ENCODE measurements at regions of chr10 and their contacts with region 1.

Region 1: GRCh38 chr10:101782811-101783735 is at the start of gene NPM3:
- DNase-seq: peak; percentile 29
- H3K4me3 ChIP-seq: peak within 1 kb of the TSS; percentile 94
- H3K27ac ChIP-seq: peak within 1 kb of the TSS; percentile 25
- H3K27me3 ChIP-seq: peaks cover 10% of the 10 kb centered on the region
- CTCF ChIP-seq: no peak
- polyA plus RNA-seq, gene NPM3: 31.5 and 41.5 TPM in 2 replicates

Region 2: DNA sequence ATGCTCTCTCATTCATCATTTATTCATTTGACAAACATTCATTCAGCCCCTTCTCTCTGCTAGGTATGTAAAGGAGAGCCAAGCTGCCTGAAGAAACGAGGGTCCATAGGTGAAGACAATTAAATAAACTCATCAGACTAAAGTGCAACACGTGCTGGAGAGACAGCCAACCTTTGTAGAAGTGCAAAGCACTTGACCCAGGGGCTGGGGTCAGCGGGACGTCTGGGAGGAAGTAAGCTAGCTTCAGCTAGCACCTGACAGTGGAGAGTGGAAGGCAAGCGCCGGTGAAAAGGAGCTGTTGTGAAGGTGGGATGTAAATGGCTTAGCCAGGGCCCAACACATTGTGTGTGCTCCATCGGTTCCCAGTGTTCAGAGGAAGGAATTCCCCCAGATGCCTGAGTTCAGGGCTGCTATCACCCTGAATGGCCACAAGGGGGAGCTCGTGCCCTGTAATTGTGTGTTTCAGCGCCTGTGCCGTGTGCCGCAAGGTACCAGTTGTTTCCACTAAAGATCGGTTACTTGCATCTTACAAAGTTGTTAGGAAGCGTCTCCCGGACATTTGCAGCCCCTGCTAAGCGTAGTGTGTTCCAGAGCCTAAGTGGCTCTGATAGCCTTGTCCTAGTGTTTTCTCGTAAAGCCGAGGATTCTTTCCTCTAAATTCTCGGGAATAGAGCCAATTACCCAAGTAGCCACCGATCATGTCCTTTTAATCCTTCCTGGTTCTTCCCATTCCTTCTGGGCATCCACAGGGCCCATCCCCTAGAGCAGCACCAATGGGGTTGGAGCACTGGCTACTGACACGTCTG is 621.4 kb before region 1 on chr10:
- CTCF ChIA-PET with region 1: interaction called, 17 read pairs
- POLR2A ChIA-PET with region 1: no interaction called
- DNase-seq: peak; percentile 43
- H3K4me3 ChIP-seq: peak overlapping the region; percentile 57
- H3K27ac ChIP-seq: no peak overlapping the region
- H3K27me3 ChIP-seq: peaks cover 42% of the 10 kb centered on the region
- CTCF ChIP-seq: peak; percentile 94

Region 3: DNA sequence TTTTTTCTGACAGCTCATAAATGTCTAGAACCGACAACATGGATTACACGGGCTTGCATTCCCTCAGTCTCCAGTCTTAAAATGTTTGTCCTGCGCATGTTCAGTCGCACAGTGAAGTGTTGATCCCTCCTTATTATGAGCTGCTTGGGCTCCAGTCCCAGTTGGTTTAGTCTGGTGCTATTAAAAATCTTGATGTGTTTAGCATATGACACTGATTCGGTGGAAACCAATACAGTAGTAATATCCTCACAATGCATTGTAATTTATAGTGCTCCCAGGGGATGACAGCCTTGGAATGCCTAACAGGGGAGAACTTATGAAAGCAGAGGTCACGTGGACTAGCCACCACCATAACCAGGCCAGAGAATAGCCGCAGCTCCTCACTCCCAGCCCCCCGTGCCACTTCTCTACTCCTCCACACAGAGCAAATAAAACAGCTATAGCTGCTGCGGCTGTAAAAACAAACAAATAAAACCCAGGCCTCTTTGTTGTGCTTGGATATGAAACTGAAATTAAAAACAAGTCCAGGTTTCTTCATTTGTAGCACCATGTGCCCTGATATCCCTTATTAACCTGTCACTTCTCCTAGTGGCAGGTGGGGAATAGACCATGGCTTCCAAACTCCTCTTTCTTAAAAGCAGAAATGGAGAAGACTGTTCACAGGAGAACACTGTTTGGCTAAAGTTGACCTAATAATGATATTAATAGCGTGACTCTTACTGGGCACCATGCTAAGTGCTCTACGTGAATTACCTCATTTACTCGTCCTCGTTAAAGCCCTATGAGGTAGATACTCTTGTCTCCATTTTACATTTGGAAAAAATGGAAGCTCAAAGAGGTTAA is 187.3 kb before region 1 on chr10:
- CTCF ChIA-PET with region 1: interaction called, 127 read pairs
- POLR2A ChIA-PET with region 1: no interaction called
- DNase-seq: no peak
- H3K4me3 ChIP-seq: no peak overlapping the region
- H3K27ac ChIP-seq: no peak overlapping the region
- H3K27me3 ChIP-seq: no peaks in the 10 kb centered on the region
- CTCF ChIP-seq: no peak

Region 4: DNA sequence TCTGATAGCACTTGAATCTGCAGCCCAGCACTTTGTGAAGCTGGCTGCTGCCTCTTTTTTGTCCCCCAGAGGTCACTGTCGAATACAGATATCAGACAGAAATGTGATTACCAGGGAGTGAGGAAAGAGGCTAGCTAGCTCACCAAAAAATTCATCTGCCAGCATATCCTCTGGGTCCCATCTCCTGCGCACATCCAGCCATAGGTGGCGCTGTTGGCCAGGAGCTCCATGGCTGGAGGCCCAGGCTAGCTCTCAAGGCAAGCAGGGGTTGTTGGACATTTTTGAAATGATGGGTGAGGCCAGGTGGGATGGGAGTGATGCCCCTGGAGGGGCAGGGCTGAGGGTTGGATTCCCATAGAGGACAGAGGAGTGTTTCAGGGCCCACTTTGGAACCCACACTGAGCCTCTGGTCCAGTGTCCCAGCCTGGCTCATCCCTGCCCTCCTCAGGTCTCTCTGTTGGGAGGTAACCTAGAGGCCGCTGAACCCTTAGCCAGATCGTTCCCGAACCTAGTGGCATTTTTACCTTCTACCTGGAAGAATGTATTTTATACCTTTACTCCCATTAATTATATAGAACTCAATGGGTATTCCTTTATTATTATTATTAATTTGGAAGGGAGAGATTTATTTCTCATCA is 180.2 kb before region 1 on chr10:
- CTCF ChIA-PET with region 1: interaction called, 127 read pairs
- POLR2A ChIA-PET with region 1: interaction called, 6 read pairs
- DNase-seq: peak; percentile 33
- H3K4me3 ChIP-seq: no peak overlapping the region
- H3K27ac ChIP-seq: no peak overlapping the region
- H3K27me3 ChIP-seq: no peaks in the 10 kb centered on the region
- CTCF ChIP-seq: peak; percentile 94

Region 5: DNA sequence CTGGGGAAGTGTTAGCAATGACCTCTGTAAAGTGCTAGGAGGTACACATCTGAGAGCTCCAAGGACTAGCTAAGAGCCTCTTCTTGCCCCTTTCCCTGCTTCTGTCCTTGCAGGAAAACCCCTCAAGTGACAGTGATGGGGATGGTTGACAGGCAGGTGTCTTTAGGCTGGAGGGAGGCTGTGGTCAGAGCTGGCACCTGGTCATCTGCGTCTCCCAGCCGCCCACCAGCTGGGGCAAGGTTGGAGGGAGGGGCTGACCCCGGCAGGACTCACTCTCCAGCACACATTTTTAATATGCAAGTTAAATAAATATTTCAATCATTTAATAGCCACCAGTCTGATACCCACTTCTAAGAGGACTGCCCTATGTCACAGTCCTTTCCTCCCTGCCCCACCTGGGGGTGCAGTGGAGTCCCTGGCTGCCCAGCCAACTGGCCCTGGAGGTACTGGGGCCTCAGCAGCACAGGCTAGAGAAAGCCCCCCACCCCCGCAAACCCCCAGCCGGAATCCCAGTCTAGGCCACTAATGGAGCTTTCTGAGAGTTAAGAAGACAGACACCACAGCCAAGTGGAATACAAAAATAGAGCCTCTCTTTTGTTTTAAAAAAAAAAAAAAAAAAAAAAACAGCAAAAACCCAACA is 13.4 kb before region 1 on chr10:
- CTCF ChIA-PET with region 1: interaction called, 20 read pairs
- POLR2A ChIA-PET with region 1: no interaction called
- DNase-seq: no peak
- H3K4me3 ChIP-seq: no peak overlapping the region
- H3K27ac ChIP-seq: no peak overlapping the region
- H3K27me3 ChIP-seq: peaks cover 85% of the 10 kb centered on the region
- CTCF ChIP-seq: no peak

Region 6: GRCh38 chr10:101797403-101798059 is 14.5 kb after region 1 on chr10:
- CTCF ChIA-PET with region 1: interaction called, 55 read pairs
- POLR2A ChIA-PET with region 1: interaction called, 4 read pairs
- DNase-seq: no peak
- H3K4me3 ChIP-seq: no peak overlapping the region
- H3K27ac ChIP-seq: no peak overlapping the region
- H3K27me3 ChIP-seq: no peaks in the 10 kb centered on the region
- CTCF ChIP-seq: no peak

Region 7: DNA sequence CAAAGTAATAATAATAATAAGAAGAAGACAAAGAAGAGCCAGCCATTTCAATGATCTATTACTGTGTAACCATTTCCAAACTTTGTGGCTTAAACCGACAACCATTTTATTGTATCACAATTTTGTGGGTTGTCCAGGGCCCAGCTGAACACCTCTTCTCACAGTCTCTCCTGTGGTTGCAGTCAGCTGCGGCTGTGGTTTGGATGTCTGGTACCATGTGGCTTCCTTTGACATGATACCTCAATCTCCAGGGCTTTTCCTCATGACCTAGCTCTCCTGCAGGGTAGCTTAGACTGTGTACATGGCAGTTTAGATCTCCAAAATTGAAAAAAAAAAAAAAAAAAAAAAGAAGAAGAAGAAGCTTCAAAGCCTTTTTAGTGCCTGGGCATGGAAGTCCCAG is 539.8 kb after region 1 on chr10:
- CTCF ChIA-PET with region 1: no interaction called
- POLR2A ChIA-PET with region 1: no interaction called
- DNase-seq: no peak
- H3K4me3 ChIP-seq: no peak overlapping the region
- H3K27ac ChIP-seq: no peak overlapping the region
- H3K27me3 ChIP-seq: no peaks in the 10 kb centered on the region
- CTCF ChIP-seq: no peak

Measured in AG04450 (cell line).